IMR-90 (cell line): ENCODE measurements at regions of chr14 and their contacts with region 1.

Region 1: GRCh38 chr14:92039719-92040430 is at the start of gene TRIP11:
- DNase-seq: peak; percentile 93
- ATAC-seq: peak; percentile 96
- H3K4me3 ChIP-seq: peak within 1 kb of the TSS; percentile 72
- H3K27ac ChIP-seq: peak within 1 kb of the TSS; percentile 92
- H3K4me1 ChIP-seq: peaks cover 7% of the 10 kb centered on the region
- H3K27me3 ChIP-seq: no peaks in the 10 kb centered on the region
- CTCF ChIP-seq: no peak
- POLR2A ChIP-seq: peak; percentile 89
- RAD21 ChIP-seq: no peak
- total RNA-seq, gene TRIP11: 53.0 and 83.5 TPM in 2 replicates

Region 2: DNA sequence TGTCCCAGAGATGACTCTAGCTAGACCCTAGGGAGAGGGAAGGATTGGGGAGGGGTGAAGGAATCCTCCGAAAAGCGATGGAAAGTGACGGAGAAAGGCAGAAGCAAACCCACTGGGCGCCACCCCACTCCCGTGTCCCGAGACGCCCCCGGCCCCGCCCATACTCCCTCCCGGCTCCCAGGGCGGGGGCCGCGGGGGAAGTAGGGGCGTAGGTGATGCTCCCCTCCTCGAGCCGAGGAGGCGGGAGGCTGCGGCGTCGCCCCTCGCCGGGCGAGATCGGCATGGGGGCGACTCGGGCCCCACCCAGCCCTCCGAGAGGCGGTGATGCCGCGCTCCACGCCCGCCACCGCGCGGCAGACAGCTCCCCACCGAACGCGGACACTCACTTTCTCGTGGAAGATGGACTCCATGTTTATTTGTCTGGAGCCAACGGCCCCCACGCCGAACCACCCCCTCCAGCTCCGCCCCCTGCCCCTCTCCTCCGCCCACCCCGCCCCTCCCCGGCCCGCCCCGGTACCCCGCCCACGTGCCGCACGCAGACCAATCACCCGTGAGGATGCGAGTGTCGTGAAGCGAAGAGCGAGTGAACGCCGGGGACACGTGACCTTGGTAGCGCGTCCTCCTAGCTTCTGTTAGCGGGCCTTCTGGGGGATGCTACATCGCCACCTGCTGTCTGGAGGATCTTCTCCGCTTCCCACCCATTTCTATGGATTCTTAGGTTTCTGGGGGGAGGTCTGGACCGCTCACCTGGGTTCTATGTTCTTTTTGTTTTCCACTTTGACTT is 66.5 kb after region 1 on chr14 and contains the start of gene ATXN3:
- CTCF ChIA-PET with region 1: no interaction called
- POLR2A ChIA-PET with region 1: no interaction called
- dilution Hi-C with region 1: no loop called
- in situ Hi-C with region 1: no loop called
- intact Hi-C with region 1: loop called (anchors 2 kb)
- DNase-seq: peak; percentile 99
- ATAC-seq: peak; percentile 95
- H3K4me3 ChIP-seq: peak within 1 kb of the TSS; percentile 85
- H3K27ac ChIP-seq: peak within 1 kb of the TSS; percentile 91
- H3K4me1 ChIP-seq: peaks cover 7% of the 10 kb centered on the region; the same call in 1 of the 2 replicates
- H3K27me3 ChIP-seq: no peaks in the 10 kb centered on the region
- CTCF ChIP-seq: peak; percentile 93
- POLR2A ChIP-seq: peak; percentile 78
- RAD21 ChIP-seq: peak; percentile 48
- total RNA-seq, gene ATXN3: 9.0 and 38.3 TPM in 2 replicates

Region 3: GRCh38 chr14:92121670-92122350 is 81.9 kb after region 1 on chr14 and contains the starts of genes CPSF2 and NDUFB1:
- CTCF ChIA-PET with region 1: no interaction called
- POLR2A ChIA-PET with region 1: no interaction called
- dilution Hi-C with region 1: no loop called
- in situ Hi-C with region 1: no loop called
- intact Hi-C with region 1: no loop called
- DNase-seq: peak; percentile 72
- ATAC-seq: peak; percentile 91
- H3K4me3 ChIP-seq: peak within 1 kb of the TSS; percentile 95
- H3K27ac ChIP-seq: peak within 1 kb of the TSS; percentile 98
- H3K4me1 ChIP-seq: peaks cover 2% of the 10 kb centered on the region; the same call in 1 of the 2 replicates
- H3K27me3 ChIP-seq: no peaks in the 10 kb centered on the region
- CTCF ChIP-seq: no peak
- POLR2A ChIP-seq: peak; percentile 96
- RAD21 ChIP-seq: no peak
- total RNA-seq, gene CPSF2: 30.6 and 51.7 TPM in 2 replicates
- total RNA-seq, gene NDUFB1: 32.1 and 158 TPM in 2 replicates

Region 4: GRCh38 chr14:92417759-92418158 is 377.9 kb after region 1 on chr14:
- CTCF ChIA-PET with region 1: no interaction called
- POLR2A ChIA-PET with region 1: no interaction called
- dilution Hi-C with region 1: no loop called
- in situ Hi-C with region 1: no loop called
- intact Hi-C with region 1: no loop called
- DNase-seq: no peak
- ATAC-seq: no peak
- H3K4me3 ChIP-seq: no peak overlapping the region
- H3K27ac ChIP-seq: no peak overlapping the region
- H3K4me1 ChIP-seq: peaks cover 8% of the 10 kb centered on the region
- H3K27me3 ChIP-seq: peaks cover 3% of the 10 kb centered on the region; the same call in 1 of the 2 replicates
- CTCF ChIP-seq: no peak
- POLR2A ChIP-seq: no peak
- RAD21 ChIP-seq: no peak